ENCODE measurements at regions of chr19 and their contacts with region 1.

Region 1: DNA sequence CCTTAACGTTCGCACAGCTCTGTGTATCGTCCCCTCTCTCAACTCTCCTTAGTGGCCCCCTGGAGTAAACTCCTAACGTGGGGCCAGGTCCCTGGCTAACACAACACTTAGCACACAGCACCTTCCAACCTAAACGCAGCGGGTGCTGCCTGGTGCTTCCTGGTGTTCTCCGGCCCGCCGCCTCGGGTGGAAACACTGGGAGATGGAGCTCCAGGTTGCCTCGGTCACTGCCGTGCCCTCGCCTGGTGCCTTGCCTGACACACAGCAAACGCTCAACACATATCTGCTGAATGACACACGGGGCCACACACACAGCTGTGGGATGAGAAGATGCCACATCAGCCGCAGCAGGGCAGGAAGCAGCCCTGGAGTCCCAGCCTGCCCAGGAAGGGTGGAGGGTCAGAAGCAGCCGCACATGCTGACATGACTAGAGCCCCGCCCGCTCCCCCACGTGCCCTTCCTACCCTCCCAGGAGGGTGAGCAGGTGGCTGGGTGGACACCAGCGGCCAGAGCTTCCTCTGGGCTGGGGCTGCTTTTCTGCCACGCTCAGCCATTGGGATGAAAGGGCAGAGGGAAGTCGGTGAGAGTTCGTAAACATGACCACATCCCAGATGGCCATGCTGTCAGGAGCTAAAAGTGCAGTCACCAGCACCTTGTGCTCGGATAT is 6.6 kb downstream of the PEPD start:
- DNase-seq: peak; percentile 86

Region 2: GRCh38 chr19:33603377-33603776 is 88.4 kb after region 1 on chr19:
- intact Hi-C with region 1: no loop called
- DNase-seq: no peak

Region 3: GRCh38 chr19:35254341-35255297 is 1739.6 kb after region 1 on chr19:
- intact Hi-C with region 1: loop called in 1 of 2 experiments (anchors 5 kb)
- DNase-seq: peak; percentile 55

Measured in posterior vena cava (tissue), 2 donors.